ENCODE measurements at regions of chr16 and their contacts with region 1.

Region 1: DNA sequence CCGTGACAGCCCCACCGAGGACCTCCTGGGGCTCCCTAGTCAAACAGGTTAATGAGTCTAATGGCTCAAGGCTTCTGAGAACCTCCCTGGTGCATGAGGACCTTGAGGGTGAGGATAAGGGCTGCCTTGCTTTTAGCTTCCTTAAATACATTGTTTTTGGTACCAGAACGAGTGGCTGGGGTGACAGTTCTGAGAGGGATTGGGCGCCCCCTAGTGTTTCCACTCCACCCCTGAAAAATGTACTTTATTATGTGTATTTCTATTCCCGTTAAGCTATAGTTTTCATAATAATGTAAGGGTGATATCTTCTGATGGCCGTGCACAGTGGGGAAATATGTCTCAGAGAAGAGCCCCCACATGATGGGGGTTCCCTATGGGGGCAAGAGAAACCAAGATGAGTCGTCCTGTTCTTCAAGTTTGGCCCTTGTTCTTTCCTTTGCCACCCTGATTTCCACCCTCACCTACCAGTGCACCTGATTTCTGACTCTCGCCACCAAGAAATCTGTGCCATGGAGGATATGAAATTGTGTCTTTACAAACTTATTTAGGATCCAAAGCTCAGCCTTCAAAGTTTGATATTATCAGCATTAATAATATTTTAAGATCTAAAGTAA is 14.5 kb upstream of the VWA3A start:
- DNase-seq: peak in 2 of 3 donors; percentile 53 to 88
- ATAC-seq: peak; percentile 77
- H3K4me3 ChIP-seq: no peak overlapping the region
- H3K4me1 ChIP-seq: no peaks in the 10 kb centered on the region
- CTCF ChIP-seq: peak; percentile 65

Region 2: DNA sequence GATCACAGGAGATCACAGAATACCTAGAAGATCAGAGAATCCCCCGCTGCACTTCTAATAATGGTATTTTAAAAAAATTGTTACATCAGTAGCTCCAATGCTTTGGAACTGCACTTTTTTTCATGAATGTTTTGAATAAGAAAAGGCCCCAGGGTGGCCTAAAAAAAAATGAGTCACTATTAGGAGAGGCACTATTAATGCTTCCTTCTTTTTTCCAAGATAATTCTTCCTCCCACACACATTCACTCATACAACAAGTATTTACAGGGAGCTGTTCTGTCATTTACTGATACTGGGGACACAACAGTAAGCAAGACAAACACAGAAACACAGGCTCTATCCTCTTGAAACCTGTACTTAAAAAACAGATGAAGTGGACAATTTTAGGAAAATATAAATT is 76.2 kb before region 1 on chr16:
- intact Hi-C with region 1: loop called (anchors 2 to 10 kb)
- DNase-seq: no peak
- ATAC-seq: no peak
- H3K4me3 ChIP-seq: no peak overlapping the region
- H3K4me1 ChIP-seq: peaks cover 6% of the 10 kb centered on the region
- CTCF ChIP-seq: no peak

Region 3: DNA sequence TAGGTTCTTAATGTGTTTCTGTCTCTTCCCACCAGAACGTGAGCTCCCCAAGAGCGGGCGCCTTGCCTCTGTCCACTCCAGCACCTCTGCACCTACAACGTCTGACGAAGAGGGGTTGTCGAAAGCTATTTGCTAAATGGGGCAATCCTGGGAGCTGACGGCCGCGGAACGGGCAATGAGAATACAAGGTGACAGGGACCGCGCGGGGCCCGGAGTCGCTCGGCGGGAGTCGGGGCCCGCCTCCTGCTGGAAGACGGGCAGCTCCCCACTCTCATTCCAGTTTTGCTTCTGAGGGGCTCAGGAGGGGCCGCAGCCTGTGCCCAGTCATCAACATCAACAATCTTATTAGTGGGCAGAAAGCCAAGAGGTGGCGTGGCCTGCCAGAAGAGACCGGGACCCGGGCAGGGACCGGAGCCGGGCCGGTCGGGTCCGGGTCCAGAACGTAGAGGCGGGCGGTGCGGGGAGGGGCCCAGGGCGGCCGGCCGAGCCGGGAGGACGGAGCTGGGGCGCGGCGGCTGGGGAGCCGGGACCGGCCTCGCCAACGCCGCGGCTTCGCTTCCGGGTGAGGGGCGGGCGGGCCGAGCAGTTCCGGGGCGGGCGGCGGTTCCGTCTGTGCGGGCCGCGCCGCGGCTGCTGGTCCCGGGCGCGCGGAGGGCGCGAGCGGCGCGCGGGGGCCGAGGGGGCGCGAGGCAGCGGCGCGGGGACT is 70.1 kb before region 1 on chr16 and contains the start of gene MOSMO:
- intact Hi-C with region 1: loop called in 1 of 2 experiments (anchors 10 kb)
- DNase-seq: peak; percentile 75 to 87 (median 80)
- ATAC-seq: peak; percentile 95
- H3K4me3 ChIP-seq: peak within 1 kb of the TSS; percentile 84
- H3K4me1 ChIP-seq: peaks cover 10% of the 10 kb centered on the region
- CTCF ChIP-seq: no peak
- total RNA-seq, gene MOSMO: 8.6 to 11.4 (median 11.4) TPM

Region 4: GRCh38 chr16:22023505-22023904 is 54.3 kb before region 1 on chr16:
- intact Hi-C with region 1: no loop called
- DNase-seq: no peak
- ATAC-seq: no peak
- H3K4me3 ChIP-seq: no peak overlapping the region
- H3K4me1 ChIP-seq: peaks cover 3% of the 10 kb centered on the region
- CTCF ChIP-seq: no peak